ENCODE measurements at regions of chr16 and their contacts with region 1.

Region 1: DNA sequence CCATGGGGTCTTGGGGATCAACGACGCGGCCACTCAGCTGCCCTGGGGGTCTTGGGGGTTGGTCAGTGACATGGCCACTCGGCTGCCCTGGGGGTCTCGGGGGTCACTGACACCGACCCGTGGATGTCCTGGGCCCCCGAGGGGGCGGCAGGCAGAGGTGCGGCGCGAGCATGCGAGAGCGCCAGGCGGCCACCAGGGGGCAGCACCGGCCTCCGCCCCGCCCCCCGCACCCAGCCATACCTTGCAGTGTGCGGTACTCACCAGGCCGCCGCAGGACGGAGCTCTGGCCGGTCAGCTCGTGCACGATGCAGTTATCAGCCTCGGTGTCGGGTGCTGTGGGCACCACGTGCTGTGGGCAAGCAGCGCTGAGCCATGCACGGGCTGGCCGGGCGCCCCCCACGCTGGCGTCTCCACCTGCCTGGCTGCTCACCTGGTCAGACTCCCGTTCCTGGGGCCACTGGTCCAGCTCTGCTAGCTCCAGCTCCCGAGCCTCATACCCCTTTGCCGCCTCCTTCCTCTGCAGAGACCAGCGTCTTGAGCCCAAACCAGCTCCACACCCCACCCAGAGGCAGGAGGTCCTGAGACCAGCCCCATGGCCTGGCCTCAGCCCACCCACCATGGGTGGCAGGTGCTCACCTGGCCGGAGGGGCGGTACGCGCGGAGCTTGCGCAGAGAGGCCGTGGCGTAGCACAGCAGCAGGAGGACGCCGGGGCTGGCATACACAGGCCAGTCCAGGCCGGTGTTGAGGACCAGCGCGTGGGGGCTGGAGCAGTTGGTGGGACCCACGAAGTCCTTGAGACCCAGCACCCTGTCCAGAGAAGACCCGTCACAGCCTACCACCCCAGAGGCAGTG is 31.2 kb downstream of the CTU2 start:
- DNase-seq: peak; percentile 90
- CTCF ChIP-seq: peak; percentile 95

Region 2: GRCh38 chr16:88700636-88701482 is 36.7 kb before region 1 on chr16:
- CTCF ChIA-PET with region 1: interaction called, 14 read pairs
- POLR2A ChIA-PET with region 1: no interaction called
- DNase-seq: peak; percentile 92
- CTCF ChIP-seq: no peak

Region 3: GRCh38 chr16:88713568-88714419 is 23.7 kb before region 1 on chr16:
- CTCF ChIA-PET with region 1: interaction called, 38 read pairs
- POLR2A ChIA-PET with region 1: no interaction called
- DNase-seq: no peak
- CTCF ChIP-seq: no peak

Region 4: GRCh38 chr16:88754912-88755744 is 17.6 kb after region 1 on chr16:
- CTCF ChIA-PET with region 1: interaction called, 68 read pairs
- POLR2A ChIA-PET with region 1: no interaction called
- DNase-seq: no peak
- CTCF ChIP-seq: peak; percentile 32

Region 5: GRCh38 chr16:88785106-88785924 is 47.8 kb after region 1 on chr16 and contains the start of gene PIEZO1:
- CTCF ChIA-PET with region 1: interaction called, 80 read pairs
- POLR2A ChIA-PET with region 1: interaction called, 3 read pairs
- DNase-seq: peak; percentile 86
- CTCF ChIP-seq: peak; percentile 97

Region 6: DNA sequence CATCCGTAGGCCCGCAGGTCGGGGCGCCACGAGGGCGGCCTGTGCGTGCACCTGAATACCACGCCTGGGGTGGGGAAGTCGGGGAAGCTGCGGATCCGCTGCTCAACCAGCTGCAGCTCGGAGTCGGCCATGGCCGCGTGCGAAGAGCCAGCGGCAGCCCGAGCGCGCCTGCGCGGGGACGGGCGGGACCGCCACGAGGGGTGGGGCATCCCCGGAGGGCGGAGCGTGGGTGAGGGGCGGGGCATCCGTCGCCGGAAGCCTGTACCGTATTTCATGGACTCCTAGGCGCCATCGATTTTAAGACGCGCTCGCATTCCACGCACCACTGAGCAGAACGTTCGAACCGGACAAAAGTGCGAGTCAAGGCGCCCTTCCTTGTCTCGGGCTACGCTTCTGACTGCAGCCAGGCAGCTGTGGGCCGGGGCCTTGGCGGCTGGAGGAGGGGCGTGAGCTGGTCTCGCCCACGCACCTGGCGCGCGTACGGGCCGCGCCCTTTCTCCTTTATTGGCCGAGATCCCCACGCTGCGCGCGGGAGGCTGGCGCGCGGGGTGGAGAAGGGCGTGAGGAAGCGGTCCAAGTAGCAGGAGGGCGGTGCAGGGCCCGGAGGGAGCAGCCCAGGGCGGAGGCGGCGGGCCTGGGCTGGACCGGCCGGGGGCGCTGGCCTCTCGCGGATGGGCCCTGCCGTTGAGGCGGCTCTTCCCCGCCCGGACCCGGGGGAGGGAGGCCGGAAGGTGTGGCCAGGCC is 74.4 kb after region 1 on chr16 and contains the start of gene APRT:
- CTCF ChIA-PET with region 1: interaction called, 11 read pairs
- POLR2A ChIA-PET with region 1: no interaction called
- DNase-seq: peak; percentile 98
- CTCF ChIP-seq: peak; percentile 57

Region 7: DNA sequence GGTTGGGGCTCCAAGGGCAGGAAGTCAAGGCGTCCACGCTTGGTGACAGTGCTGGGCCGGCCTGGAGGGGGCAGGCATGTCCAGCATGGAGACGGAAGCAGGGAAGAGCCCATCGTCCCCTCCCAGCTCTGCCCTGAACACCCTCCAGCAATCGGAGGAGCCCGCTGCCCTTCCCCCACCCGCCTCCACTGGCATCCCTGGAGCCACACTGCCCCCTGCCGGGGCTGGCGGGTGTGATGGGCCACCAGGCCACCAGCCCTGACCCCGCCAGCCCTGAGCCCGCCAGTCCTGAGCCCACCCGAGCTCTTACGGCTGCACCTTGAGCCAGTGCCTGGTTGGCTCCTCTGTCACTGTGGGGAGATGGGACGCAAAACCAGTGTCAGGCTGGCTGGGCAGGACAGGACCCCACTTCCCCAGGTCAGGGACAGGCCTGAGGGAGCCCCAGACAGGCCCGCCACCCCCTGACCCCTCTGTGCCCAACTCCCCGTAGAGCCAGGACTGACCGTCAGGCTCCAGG is 430.0 kb after region 1 on chr16:
- CTCF ChIA-PET with region 1: interaction called, 18 read pairs
- POLR2A ChIA-PET with region 1: no interaction called
- DNase-seq: peak; percentile 88
- CTCF ChIP-seq: peak; percentile 84